Psoas muscle (tissue), 8 donors: ENCODE measurements at regions of chr4 and their contacts with region 1.

Region 1: GRCh38 chr4:185634066-185634652 is 98.9 kb upstream of the PDLIM3 start:
- DNase-seq: no peak
- ATAC-seq: no peak
- H3K4me3 ChIP-seq: no peak overlapping the region
- H3K27ac ChIP-seq: no peak overlapping the region
- H3K4me1 ChIP-seq: no peaks in the 10 kb centered on the region
- H3K27me3 ChIP-seq: peaks cover 0 to 2% (median 0%) of the 10 kb centered on the region in 3 donors
- CTCF ChIP-seq: peak; percentile 51

Region 2: GRCh38 chr4:186021461-186022167 is 387.5 kb after region 1 on chr4:
- intact Hi-C with region 1: loop called in 1 of 2 experiments (anchors 2 kb)
- DNase-seq: no peak
- ATAC-seq: peak in 3 of 4 donors; percentile 62 to 73 (median 66)
- H3K4me3 ChIP-seq: no peak overlapping the region
- H3K27ac ChIP-seq: no peak overlapping the region
- H3K4me1 ChIP-seq: no peaks in the 10 kb centered on the region
- H3K27me3 ChIP-seq: no peaks in the 10 kb centered on the region
- CTCF ChIP-seq: peak; percentile 63